ENCODE measurements at regions of chr5 and their contacts with region 1.

Region 1: GRCh38 chr5:62305715-62306322 is at the start of gene KIF2A:
- DNase-seq: peak; percentile 93 to 96 (median 95)
- H3K4me3 ChIP-seq: peak within 1 kb of the TSS; percentile 73 to 82
- H3K4me3 Mint-ChIP-seq: peak within 1 kb of the TSS; percentile 97 to 100 (median 99)
- H3K27ac ChIP-seq: peak within 1 kb of the TSS; percentile 76
- H3K27ac Mint-ChIP-seq: peak within 1 kb of the TSS; percentile 97 to 100 (median 99)
- H3K4me1 ChIP-seq: peaks cover 48% of the 10 kb centered on the region
- H3K4me1 Mint-ChIP-seq: peaks cover 39 to 57% (median 47%) of the 10 kb centered on the region in 4 donors
- H3K27me3 ChIP-seq: no peaks in the 10 kb centered on the region
- H3K27me3 Mint-ChIP-seq: no peaks in the 10 kb centered on the region
- total RNA-seq, gene KIF2A: 151 to 157 TPM

Region 2: DNA sequence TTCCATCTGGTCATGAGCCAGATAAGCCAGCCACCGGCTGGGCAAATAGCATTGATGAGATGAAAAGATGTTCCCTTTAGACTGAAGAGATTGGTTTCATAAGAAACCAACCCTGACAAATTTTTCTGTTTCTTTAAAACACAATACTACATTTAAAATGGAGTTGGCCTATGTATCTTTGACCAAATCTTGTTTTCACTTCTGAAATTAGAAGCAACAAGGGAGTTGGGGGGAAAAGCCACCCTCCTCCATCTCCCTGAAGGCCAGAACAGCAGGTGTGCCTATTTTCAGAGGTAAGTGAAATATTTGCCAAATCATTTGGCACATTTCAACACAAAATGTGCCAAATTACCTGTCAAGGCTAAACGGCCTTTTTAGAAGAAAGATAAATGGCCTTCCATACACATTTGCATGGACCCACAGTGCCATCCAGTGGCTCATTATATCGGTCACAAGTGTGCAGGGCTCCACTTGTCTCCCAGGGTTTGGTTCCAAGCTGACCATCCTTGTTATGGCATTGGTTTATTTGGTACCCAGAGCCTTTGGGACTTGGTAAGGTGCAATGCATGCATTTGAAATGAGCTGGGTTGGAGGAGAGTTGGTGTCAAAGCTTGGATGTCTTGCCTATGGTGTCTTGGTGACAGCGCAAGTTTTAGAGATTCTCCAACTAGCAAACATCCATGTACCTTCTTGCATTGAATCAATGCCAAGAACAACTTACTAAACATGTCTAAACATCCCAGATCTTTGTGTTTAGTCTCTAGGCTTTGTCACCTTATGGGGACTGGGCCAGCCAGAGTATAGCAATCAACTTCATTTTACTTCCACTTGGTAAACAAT is 371.8 kb before region 1 on chr5:
- CTCF ChIA-PET with region 1: no interaction called
- POLR2A ChIA-PET with region 1: no interaction called
- intact Hi-C with region 1: no loop called
- DNase-seq: no peak
- H3K4me3 ChIP-seq: no peak overlapping the region
- H3K4me3 Mint-ChIP-seq: no peak overlapping the region
- H3K27ac ChIP-seq: no peak overlapping the region
- H3K27ac Mint-ChIP-seq: no peak overlapping the region
- H3K4me1 ChIP-seq: no peaks in the 10 kb centered on the region
- H3K4me1 Mint-ChIP-seq: no peaks in the 10 kb centered on the region
- H3K27me3 ChIP-seq: no peaks in the 10 kb centered on the region
- H3K27me3 Mint-ChIP-seq: peaks cover 2% of the 10 kb centered on the region in 2 donors

Region 3: DNA sequence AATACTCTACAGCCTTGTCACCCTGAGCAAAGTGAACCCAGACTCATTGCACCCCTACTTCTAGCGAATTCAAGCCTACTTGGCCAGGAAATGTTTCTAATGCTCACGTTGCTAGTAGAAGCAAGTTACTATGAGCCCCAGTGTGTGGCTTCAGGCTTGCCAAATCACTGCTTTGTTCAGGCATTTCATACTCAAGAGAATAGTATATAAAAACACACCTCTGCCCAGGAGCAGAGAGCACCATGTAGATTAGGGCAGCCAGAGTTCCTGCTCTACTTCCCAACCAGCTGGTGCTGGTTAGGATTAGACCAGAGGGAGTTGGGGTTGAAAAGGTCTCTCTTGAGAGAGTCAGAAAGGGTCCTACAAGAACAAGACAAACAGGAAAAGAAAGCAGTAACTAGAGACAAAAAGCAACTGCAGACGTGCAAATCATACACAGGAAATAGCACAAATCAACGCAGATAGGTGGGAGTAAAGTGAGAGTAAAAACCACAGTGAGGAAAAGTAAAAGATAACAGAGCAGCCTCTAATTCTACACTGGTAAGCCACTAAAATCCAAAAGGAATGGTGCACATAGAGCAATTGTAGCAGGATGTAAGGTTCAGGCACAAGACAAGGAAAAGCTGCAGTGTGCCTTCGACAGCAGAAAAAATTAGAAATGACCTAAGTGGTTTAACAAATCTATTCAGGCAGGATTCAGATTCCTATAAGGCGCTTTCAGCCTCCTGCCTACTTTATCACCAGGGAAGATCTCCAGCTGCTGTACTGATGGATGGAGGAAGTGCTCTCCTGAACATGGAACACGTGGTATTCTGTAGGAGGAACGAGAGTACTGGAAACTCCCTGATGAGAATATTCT is 49.4 kb before region 1 on chr5:
- CTCF ChIA-PET with region 1: interaction called, 3 read pairs
- POLR2A ChIA-PET with region 1: interaction called, 17 read pairs
- intact Hi-C with region 1: loop called (anchors 5 kb)
- DNase-seq: peak in 4 of 5 donors; percentile 25 to 51 (median 46)
- H3K4me3 ChIP-seq: no peak overlapping the region
- H3K4me3 Mint-ChIP-seq: peak overlapping the region; percentile 66 to 89 (median 84)
- H3K27ac ChIP-seq: peak overlapping the region; percentile 57
- H3K27ac Mint-ChIP-seq: peak overlapping the region; percentile 74 to 99 (median 89)
- H3K4me1 ChIP-seq: peaks cover 38% of the 10 kb centered on the region
- H3K4me1 Mint-ChIP-seq: peaks cover 37 to 64% (median 54%) of the 10 kb centered on the region in 4 donors
- H3K27me3 ChIP-seq: no peaks in the 10 kb centered on the region
- H3K27me3 Mint-ChIP-seq: no peaks in the 10 kb centered on the region

Region 4: DNA sequence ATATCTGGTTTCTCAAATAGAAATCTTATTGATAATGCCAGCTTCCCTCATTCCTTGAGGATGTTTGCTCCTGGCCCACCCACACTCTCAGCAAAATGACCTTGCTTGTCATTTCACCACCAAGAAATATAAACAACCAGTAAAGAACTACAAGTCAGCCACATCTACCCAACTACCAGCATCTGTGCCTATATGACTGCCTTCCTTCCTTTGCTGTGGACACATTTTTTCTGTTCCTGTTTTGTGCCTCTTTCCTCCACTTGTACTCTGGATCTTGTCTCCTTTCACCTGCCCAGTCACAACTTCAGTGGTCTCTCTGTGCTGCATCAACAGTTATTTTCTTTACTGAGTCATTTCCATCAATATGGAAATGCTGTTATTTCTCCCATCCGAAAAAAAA is 20.5 kb after region 1 on chr5:
- CTCF ChIA-PET with region 1: interaction called, 5 read pairs
- POLR2A ChIA-PET with region 1: interaction called, 5 read pairs
- intact Hi-C with region 1: loop called (anchors 2 kb)
- DNase-seq: no peak
- H3K4me3 ChIP-seq: no peak overlapping the region
- H3K4me3 Mint-ChIP-seq: peak overlapping the region in 4 of 8 donors; percentile 14 to 52 (median 42)
- H3K27ac ChIP-seq: no peak overlapping the region
- H3K27ac Mint-ChIP-seq: peak overlapping the region; percentile 31 to 81 (median 69)
- H3K4me1 ChIP-seq: peaks cover 57% of the 10 kb centered on the region
- H3K4me1 Mint-ChIP-seq: peaks cover 55 to 83% (median 70%) of the 10 kb centered on the region in 4 donors
- H3K27me3 ChIP-seq: no peaks in the 10 kb centered on the region
- H3K27me3 Mint-ChIP-seq: no peaks in the 10 kb centered on the region

Region 5: DNA sequence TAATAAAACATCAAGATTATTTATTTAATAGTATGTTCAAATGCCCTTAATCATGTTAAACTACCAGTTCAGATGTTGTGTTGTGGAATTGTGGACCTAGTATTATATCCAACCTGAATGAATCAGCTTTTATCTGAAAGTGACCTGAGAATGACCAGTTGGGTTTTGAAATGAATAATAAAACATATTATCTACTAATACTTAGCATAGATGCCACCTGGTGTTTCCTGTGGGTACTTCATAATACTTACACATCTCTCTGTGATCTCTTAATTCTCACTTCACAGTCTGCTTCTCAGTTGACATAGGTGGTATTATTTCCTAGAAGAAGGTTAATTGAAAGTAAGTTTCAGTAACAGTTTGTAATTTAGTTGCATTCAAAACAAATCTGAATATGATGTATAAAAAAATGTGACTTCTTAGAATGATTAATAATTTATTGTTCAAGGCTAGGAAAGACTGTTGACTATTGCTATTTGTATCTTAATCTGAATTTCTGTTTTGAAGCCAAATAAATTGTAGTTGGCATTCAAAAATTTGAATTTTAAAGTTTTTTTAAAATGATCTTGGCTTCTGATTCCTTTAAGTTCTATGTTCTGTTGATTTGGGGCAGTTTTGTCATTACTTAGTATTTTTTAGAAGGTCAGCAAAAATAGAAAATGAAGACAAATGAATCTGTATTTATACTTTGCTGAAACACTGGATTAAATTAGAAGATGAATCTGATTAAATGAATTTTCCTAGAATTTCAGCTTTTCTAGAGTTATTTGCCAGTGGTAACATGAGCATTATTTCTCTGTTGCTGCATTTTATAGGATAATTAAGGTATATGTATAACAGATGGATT is 48.4 kb after region 1 on chr5:
- CTCF ChIA-PET with region 1: interaction called, 11 read pairs
- POLR2A ChIA-PET with region 1: interaction called, 4 read pairs
- intact Hi-C with region 1: loop called (anchors 1 kb)
- DNase-seq: peak in 4 of 5 donors; percentile 46 to 52 (median 50)
- H3K4me3 ChIP-seq: no peak overlapping the region
- H3K4me3 Mint-ChIP-seq: no peak overlapping the region
- H3K27ac ChIP-seq: no peak overlapping the region
- H3K27ac Mint-ChIP-seq: peak overlapping the region in 5 of 7 donors; percentile 26 to 73 (median 38)
- H3K4me1 ChIP-seq: peaks cover 7% of the 10 kb centered on the region
- H3K4me1 Mint-ChIP-seq: peaks cover 2 to 5% (median 4%) of the 10 kb centered on the region in 4 donors
- H3K27me3 ChIP-seq: no peaks in the 10 kb centered on the region
- H3K27me3 Mint-ChIP-seq: no peaks in the 10 kb centered on the region

Region 6: DNA sequence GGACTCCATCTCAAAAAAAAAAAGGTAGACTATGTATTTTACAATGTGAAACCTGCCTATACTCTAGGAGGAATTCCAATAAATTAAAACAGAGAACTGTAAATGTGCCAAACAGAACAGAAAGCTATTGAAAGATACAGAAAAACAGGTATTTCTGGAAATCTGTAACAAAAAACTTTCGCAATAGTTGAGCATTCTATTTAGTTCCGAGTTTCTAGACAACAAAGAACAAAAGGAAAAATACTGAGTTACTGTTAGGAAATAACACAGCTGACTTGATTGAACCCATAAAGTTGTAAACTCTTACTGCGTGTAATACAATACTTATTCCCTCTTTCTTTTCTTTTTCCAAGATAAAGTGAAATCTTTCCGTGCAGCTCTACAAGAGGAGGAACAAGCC is 79.3 kb after region 1 on chr5:
- CTCF ChIA-PET with region 1: no interaction called
- POLR2A ChIA-PET with region 1: no interaction called
- intact Hi-C with region 1: no loop called
- DNase-seq: no peak
- H3K4me3 ChIP-seq: no peak overlapping the region
- H3K4me3 Mint-ChIP-seq: no peak overlapping the region
- H3K27ac ChIP-seq: no peak overlapping the region
- H3K27ac Mint-ChIP-seq: peak overlapping the region in 2 of 7 donors; percentile 10 to 29
- H3K4me1 ChIP-seq: no peaks in the 10 kb centered on the region
- H3K4me1 Mint-ChIP-seq: no peaks in the 10 kb centered on the region
- H3K27me3 ChIP-seq: no peaks in the 10 kb centered on the region
- H3K27me3 Mint-ChIP-seq: no peaks in the 10 kb centered on the region

Region 7: GRCh38 chr5:62412537-62413329 is 106.9 kb after region 1 on chr5 and contains the start of gene IPO11:
- CTCF ChIA-PET with region 1: no interaction called
- POLR2A ChIA-PET with region 1: interaction called, 10 read pairs
- intact Hi-C with region 1: loop called (anchors 1 kb)
- DNase-seq: peak; percentile 98 to 99 (median 98)
- H3K4me3 ChIP-seq: peak within 1 kb of the TSS; percentile 82 to 87
- H3K4me3 Mint-ChIP-seq: peak within 1 kb of the TSS; percentile 82 to 97 (median 93)
- H3K27ac ChIP-seq: peak within 1 kb of the TSS; percentile 68
- H3K27ac Mint-ChIP-seq: peak within 1 kb of the TSS; percentile 88 to 98 (median 95)
- H3K4me1 ChIP-seq: peaks cover 17% of the 10 kb centered on the region
- H3K4me1 Mint-ChIP-seq: peaks cover 19 to 31% (median 23%) of the 10 kb centered on the region in 4 donors
- H3K27me3 ChIP-seq: no peaks in the 10 kb centered on the region
- H3K27me3 Mint-ChIP-seq: no peaks in the 10 kb centered on the region
- total RNA-seq, gene IPO11: 23.8 to 28.5 TPM